ENCODE measurements at regions of chr1 and their contacts with region 1.

Region 1: GRCh38 chr1:2300851-2301606 is 72.9 kb downstream of the SKI start:
- DNase-seq: peak; percentile 82 to 99 (median 97)
- ATAC-seq: peak; percentile 82 to 84
- H3K4me3 Mint-ChIP-seq: peak overlapping the region; percentile 79 to 90 (median 86)
- H3K27ac Mint-ChIP-seq: peak overlapping the region; percentile 89 to 100 (median 99)
- H3K4me1 Mint-ChIP-seq: peaks cover 17 to 68% (median 60%) of the 10 kb centered on the region in 4 donors
- H3K27me3 Mint-ChIP-seq: no peaks in the 10 kb centered on the region

Region 2: GRCh38 chr1:2227346-2228153 is 73.5 kb before region 1 on chr1:
- POLR2A ChIA-PET with region 1: interaction called, 115 read pairs
- DNase-seq: peak; percentile 90 to 96 (median 94)
- ATAC-seq: peak; percentile 75
- H3K4me3 Mint-ChIP-seq: peak overlapping the region in 9 of 10 donors; percentile 30 to 88 (median 61)
- H3K27ac Mint-ChIP-seq: peak overlapping the region in 5 of 10 donors; percentile 33 to 92 (median 62)
- H3K4me1 Mint-ChIP-seq: peaks cover 22 to 39% (median 25%) of the 10 kb centered on the region in 4 donors
- H3K27me3 Mint-ChIP-seq: no peaks in the 10 kb centered on the region

Region 3: GRCh38 chr1:2290595-2291510 is 10.2 kb before region 1 on chr1:
- POLR2A ChIA-PET with region 1: interaction called, 19 read pairs
- DNase-seq: peak in 9 of 10 donors; percentile 65 to 79 (median 72)
- ATAC-seq: peak; percentile 66 to 77
- H3K4me3 Mint-ChIP-seq: peak overlapping the region; percentile 75 to 92 (median 88)
- H3K27ac Mint-ChIP-seq: peak overlapping the region; percentile 90 to 98 (median 94)
- H3K4me1 Mint-ChIP-seq: peaks cover 37 to 91% (median 87%) of the 10 kb centered on the region in 4 donors
- H3K27me3 Mint-ChIP-seq: no peaks in the 10 kb centered on the region

Region 4: GRCh38 chr1:2314803-2315673 is 14.0 kb after region 1 on chr1:
- POLR2A ChIA-PET with region 1: interaction called, 112 read pairs
- DNase-seq: peak; percentile 65 to 86 (median 76)
- ATAC-seq: peak; percentile 44 to 62
- H3K4me3 Mint-ChIP-seq: peak overlapping the region; percentile 36 to 77 (median 69)
- H3K27ac Mint-ChIP-seq: peak overlapping the region in 9 of 10 donors; percentile 48 to 92 (median 85)
- H3K4me1 Mint-ChIP-seq: peaks cover 4 to 47% (median 30%) of the 10 kb centered on the region in 4 donors
- H3K27me3 Mint-ChIP-seq: no peaks in the 10 kb centered on the region

Region 5: DNA sequence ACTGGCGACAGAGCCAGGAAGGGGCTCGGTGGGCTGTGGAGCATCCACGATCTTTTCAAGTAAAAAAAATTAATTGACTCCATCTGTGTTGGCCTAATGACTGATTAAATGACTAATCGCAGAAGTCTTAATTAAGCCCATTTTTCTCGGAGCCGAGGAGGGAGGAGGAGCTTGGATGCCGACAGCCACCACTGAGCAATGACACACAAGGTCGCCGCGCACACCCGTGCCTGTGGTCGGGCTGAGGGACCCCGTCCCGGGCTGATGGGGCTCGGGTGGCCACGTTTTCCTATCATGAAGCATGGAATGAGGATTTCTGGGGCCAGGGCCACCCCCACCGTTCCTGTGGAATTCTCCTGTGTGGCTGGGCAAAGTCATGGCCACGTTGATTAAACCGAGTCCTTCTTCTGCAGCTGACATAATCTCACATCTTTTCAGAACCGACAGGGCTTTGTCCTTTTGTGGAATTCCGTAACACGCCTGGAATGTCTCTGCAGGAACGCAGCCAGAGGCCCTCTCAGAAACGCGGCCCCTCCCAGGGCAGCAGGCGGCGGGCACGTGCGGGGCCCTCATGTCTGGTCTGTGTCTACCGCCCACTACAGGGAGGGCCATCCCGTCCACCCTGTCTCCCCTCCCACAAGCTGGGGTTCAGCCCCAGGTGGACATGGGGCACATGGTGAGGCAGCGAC is 29.6 kb after region 1 on chr1:
- POLR2A ChIA-PET with region 1: no interaction called
- DNase-seq: no peak
- ATAC-seq: no peak
- H3K4me3 Mint-ChIP-seq: no peak overlapping the region
- H3K27ac Mint-ChIP-seq: peak overlapping the region in 2 of 10 donors; percentile 37 to 56
- H3K4me1 Mint-ChIP-seq: peaks cover 0 to 7% (median 5%) of the 10 kb centered on the region in 4 donors
- H3K27me3 Mint-ChIP-seq: peaks cover 4 to 14% (median 9%) of the 10 kb centered on the region in 5 donors

Region 6: DNA sequence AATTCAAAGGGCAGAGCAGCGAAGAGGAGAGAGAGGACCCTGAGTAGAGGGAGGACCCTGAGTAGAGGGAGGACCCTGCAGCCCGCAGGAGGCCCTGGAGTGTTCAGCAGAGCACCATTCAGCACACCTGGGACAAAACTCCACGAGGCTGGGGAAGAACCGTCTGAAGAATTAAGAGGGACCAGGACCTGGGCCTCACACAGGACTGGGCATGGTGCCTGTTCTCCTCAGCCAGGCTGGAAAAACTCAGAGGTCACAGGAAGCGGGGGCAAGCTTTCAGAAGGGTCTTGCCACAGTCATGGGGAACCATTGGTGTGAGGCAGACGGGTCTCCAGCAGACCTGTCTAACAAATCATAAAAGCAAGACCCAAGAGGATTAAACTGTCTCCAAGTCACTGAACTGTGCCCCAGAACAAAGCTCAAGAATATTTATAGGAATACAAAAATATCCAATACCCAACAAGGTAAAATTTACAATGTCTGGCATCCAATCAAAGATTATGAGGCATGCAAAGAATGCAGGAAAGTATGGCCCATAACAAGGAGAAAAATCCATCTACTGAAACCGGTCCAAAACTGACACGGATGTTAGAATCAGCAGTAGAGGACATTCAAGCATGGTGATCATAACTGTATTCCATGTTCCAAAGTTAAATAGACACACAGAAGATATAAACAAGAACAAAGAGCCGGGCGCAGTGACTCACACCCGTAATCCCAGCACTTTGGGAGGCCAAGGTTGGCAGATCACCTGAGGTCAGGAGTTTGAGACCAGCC is 59.7 kb after region 1 on chr1:
- POLR2A ChIA-PET with region 1: no interaction called
- DNase-seq: peak in 1 of 10 donors; percentile 35
- ATAC-seq: no peak
- H3K4me3 Mint-ChIP-seq: no peak overlapping the region
- H3K27ac Mint-ChIP-seq: peak overlapping the region in 1 of 10 donors; percentile 78
- H3K4me1 Mint-ChIP-seq: peaks cover 0 to 3% (median 0%) of the 10 kb centered on the region in 4 donors
- H3K27me3 Mint-ChIP-seq: no peaks in the 10 kb centered on the region